ENCODE measurements at regions of chr11 and their contacts with region 1.

Region 1: GRCh38 chr11:128472128-128473089 is 114.9 kb downstream of the ETS1 start:
- DNase-seq: peak; percentile 61
- H3K4me3 Mint-ChIP-seq: peak overlapping the region; percentile 80
- H3K27ac Mint-ChIP-seq: peak overlapping the region; percentile 95
- H3K4me1 Mint-ChIP-seq: peaks cover 94% of the 10 kb centered on the region
- H3K27me3 Mint-ChIP-seq: no peaks in the 10 kb centered on the region

Region 2: DNA sequence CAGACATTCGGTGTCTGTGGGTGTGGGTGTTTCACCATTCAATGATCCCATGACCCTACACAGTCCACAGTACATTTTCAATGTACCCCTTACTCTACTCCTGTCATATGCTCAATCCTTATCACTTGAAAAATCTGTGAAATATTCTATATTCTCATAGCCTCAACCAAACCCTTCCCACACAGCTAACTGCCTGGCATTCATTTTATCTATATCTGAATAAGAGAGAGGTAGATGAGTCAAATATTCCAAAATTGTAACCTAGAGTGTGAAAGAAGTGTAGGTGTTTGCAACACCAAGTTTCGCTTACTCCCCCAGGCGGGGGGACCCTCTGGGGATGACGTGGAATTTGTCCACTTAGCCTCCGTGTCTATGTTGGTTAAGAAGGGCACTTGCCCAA is 239.8 kb before region 1 on chr11:
- intact Hi-C with region 1: loop called (anchors 1 kb)
- DNase-seq: no peak
- H3K4me3 Mint-ChIP-seq: peak overlapping the region; percentile 58
- H3K27ac Mint-ChIP-seq: peak overlapping the region; percentile 85
- H3K4me1 Mint-ChIP-seq: peaks cover 58% of the 10 kb centered on the region
- H3K27me3 Mint-ChIP-seq: peaks cover 2% of the 10 kb centered on the region

Region 3: GRCh38 chr11:128323381-128323780 is 149.0 kb before region 1 on chr11:
- intact Hi-C with region 1: loop called (anchors 1 kb)
- DNase-seq: no peak
- H3K4me3 Mint-ChIP-seq: peak overlapping the region; percentile 70
- H3K27ac Mint-ChIP-seq: peak overlapping the region; percentile 95
- H3K4me1 Mint-ChIP-seq: peaks cover 91% of the 10 kb centered on the region
- H3K27me3 Mint-ChIP-seq: no peaks in the 10 kb centered on the region

Region 4: DNA sequence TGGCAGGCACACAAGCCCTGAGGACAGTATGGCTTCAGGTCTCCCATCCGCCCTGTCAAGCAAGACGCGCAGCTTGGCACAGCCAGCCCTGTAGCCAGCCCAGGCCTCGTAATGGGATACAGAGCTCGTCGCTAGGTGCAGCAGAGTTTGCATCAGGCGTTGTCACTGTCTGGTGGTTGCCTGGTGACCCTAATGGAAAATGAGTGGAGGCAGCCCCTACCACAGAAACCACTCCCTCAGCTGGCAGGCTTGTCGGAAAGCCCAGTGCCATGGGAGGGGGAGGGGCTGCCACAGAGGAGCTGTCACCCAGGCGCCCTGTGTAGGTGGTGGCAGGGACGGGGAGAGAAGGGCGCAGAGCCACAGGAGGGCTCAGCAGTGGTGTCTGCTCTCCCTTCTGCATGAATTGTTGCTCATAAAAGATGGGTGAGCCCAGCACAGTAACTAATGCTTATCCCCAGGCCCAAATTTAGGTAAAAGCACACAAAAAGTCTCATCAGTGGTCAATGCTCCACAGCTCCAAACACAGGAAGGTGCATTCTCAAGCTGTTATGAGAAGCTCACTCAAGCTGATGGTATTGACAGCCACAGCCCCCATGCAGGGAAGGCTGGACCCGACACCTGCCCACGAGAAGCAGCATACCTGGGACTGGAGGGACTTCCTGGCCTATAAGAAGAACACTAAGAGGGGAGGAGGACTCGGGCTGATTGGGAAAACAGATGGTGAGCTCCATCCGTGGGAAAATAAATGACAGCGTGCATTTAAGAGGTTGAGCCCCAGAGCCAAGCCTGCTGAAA is 49.6 kb before region 1 on chr11:
- intact Hi-C with region 1: no loop called
- DNase-seq: peak; percentile 64
- H3K4me3 Mint-ChIP-seq: peak overlapping the region; percentile 69
- H3K27ac Mint-ChIP-seq: peak overlapping the region; percentile 92
- H3K4me1 Mint-ChIP-seq: peaks cover 38% of the 10 kb centered on the region
- H3K27me3 Mint-ChIP-seq: no peaks in the 10 kb centered on the region

Region 5: GRCh38 chr11:128482512-128483191 is 10.2 kb after region 1 on chr11:
- intact Hi-C with region 1: loop called (anchors 1 kb)
- DNase-seq: no peak
- H3K4me3 Mint-ChIP-seq: peak overlapping the region; percentile 80
- H3K27ac Mint-ChIP-seq: peak overlapping the region; percentile 95
- H3K4me1 Mint-ChIP-seq: peaks cover 96% of the 10 kb centered on the region
- H3K27me3 Mint-ChIP-seq: no peaks in the 10 kb centered on the region

Region 6: DNA sequence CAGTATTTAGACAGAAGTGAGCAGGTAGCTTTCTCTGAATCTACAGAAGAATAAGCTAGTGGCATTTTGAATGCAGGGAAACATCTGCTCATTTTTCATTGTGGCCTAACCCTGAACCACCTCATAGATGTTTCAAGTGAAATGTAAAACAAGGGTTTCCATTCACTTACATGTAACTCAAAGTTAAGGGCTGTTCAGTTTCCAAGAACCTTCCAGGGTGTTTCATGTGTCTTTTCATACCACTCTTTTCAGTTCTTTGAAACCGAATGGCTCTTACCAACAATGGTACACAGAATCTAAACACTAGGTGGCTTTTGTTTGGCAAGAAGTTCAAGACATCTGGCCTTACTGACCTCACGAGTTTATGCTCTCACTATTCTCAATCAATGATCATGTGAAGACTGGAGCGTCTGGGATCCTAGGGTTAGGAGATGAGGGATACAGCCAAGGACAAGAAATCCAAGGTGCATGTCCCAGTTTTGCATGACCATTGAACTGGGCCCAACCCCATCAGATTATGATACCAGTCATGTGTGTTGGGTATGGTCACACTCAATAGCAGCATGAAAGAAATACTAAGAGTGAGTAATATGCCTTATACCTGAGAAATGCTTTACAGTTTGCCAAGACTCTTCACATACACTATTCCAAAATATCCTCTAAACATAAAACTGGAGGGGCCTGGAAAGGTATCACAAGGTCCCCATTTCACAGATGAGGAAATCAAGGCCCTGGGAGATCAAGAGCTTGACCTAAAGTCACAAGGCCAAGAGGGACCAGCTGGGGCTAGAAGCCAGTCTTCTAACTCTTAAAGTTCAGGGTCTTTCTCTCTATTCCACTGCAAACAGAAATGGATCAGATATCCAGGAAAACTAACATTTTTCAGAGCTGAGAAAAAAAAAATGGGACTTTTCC is 22.3 kb after region 1 on chr11:
- intact Hi-C with region 1: loop called (anchors 1 kb)
- DNase-seq: no peak
- H3K4me3 Mint-ChIP-seq: peak overlapping the region; percentile 74
- H3K27ac Mint-ChIP-seq: peak overlapping the region; percentile 98
- H3K4me1 Mint-ChIP-seq: peaks cover 98% of the 10 kb centered on the region
- H3K27me3 Mint-ChIP-seq: no peaks in the 10 kb centered on the region

Region 7: GRCh38 chr11:128582496-128583366 is 110.3 kb after region 1 on chr11:
- intact Hi-C with region 1: loop called (anchors 1 kb)
- DNase-seq: no peak
- H3K4me3 Mint-ChIP-seq: no peak overlapping the region
- H3K27ac Mint-ChIP-seq: peak overlapping the region; percentile 80
- H3K4me1 Mint-ChIP-seq: peaks cover 51% of the 10 kb centered on the region
- H3K27me3 Mint-ChIP-seq: peaks cover 6% of the 10 kb centered on the region

Measured in activated T-helper 1 cell treated with anti-CD3 and anti-CD28 coated beads, Interleukin-12 subunit alpha, Interleukin-12 subunit beta, Interleukin-2, Interleukin-4 antibody, amounts not matched to agents 30 ng/mL and 10 ng/mL and 1 ng/mL, durations not matched to agents 14 hours and 24 hours and 36 hours (primary cell).